CD8-positive, alpha-beta T cell (primary cell): ENCODE measurements at regions of chr20 and their contacts with region 1.

Region 1: GRCh38 chr20:19522071-19522801 is 235.8 kb upstream of the RIN2 start:
- DNase-seq: peak in 3 of 9 experiments; percentile 8 to 27 (median 25)
- ATAC-seq: no peak
- H3K4me3 ChIP-seq: no peak overlapping the region
- H3K4me3 Mint-ChIP-seq: no peak overlapping the region
- H3K27ac ChIP-seq: no peak overlapping the region
- H3K27ac Mint-ChIP-seq: peak overlapping the region; percentile 19
- H3K4me1 ChIP-seq: peaks cover 26% of the 10 kb centered on the region
- H3K4me1 Mint-ChIP-seq: peaks cover 22% of the 10 kb centered on the region
- H3K27me3 ChIP-seq: no peaks in the 10 kb centered on the region
- H3K27me3 Mint-ChIP-seq: peaks cover 2% of the 10 kb centered on the region
- CTCF ChIP-seq: no peak

Region 2: GRCh38 chr20:18984238-18985200 is 537.7 kb before region 1 on chr20:
- CTCF ChIA-PET with region 1: no interaction called
- POLR2A ChIA-PET with region 1: no interaction called
- intact Hi-C with region 1: no loop called
- DNase-seq: no peak
- ATAC-seq: no peak
- H3K4me3 ChIP-seq: no peak overlapping the region
- H3K4me3 Mint-ChIP-seq: no peak overlapping the region
- H3K27ac ChIP-seq: no peak overlapping the region
- H3K27ac Mint-ChIP-seq: no peak overlapping the region
- H3K4me1 ChIP-seq: no peaks in the 10 kb centered on the region
- H3K4me1 Mint-ChIP-seq: no peaks in the 10 kb centered on the region
- H3K27me3 ChIP-seq: no peaks in the 10 kb centered on the region
- H3K27me3 Mint-ChIP-seq: peaks cover under 1% of the 10 kb centered on the region
- CTCF ChIP-seq: no peak

Region 3: DNA sequence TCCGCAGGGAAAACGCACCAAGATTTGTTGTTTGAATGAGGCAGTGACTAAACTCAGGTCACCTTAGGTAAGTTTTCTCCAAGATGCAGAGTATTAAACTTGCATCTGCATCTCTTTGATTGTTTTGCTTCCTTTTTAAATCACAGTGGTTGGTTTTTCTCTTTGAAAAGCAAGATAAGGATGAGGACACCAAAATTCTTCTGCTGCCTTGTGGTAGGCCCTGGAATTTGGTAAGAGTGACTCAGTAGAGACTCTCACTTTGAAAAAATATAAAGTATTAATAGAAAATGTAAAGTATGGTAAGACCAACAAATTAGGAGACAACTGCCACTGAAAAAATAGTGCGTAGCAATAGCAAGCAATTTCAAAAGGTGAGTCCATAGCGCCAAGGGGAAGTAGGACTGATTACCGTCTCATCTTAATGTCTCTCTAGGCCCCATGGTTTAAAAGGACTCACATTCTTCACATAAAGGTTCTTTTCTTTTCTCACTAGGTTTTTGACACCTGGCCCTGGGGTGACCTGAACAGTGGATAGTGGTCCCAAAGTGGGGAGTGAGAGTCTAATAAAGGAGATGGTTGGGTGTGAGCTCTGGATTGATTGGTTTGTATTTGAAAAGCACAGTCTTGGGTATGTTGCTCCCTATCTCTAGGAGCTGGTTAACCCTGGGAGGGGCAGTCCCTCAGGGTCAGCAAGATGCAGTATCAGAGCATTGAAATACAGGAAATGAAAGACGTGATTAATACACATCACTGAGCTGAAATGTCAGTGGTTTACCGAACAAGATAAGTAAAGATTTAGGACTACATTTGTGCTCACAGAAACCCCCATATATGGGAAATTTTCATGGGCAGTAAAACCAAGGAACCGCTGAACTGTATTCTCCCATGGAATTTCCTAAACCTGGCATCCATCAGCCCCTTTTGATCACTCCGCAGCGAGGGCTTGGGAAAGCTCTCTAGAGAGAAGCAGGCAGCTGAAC is 88.6 kb before region 1 on chr20:
- CTCF ChIA-PET with region 1: no interaction called
- POLR2A ChIA-PET with region 1: no interaction called
- intact Hi-C with region 1: no loop called
- DNase-seq: no peak
- ATAC-seq: no peak
- H3K4me3 ChIP-seq: no peak overlapping the region
- H3K4me3 Mint-ChIP-seq: no peak overlapping the region
- H3K27ac ChIP-seq: no peak overlapping the region
- H3K27ac Mint-ChIP-seq: no peak overlapping the region
- H3K4me1 ChIP-seq: no peaks in the 10 kb centered on the region
- H3K4me1 Mint-ChIP-seq: no peaks in the 10 kb centered on the region
- H3K27me3 ChIP-seq: no peaks in the 10 kb centered on the region
- H3K27me3 Mint-ChIP-seq: peaks cover 5% of the 10 kb centered on the region
- CTCF ChIP-seq: no peak

Region 4: GRCh38 chr20:19492687-19493336 is 29.4 kb before region 1 on chr20:
- CTCF ChIA-PET with region 1: no interaction called
- POLR2A ChIA-PET with region 1: no interaction called
- intact Hi-C with region 1: no loop called
- DNase-seq: no peak
- ATAC-seq: no peak
- H3K4me3 ChIP-seq: no peak overlapping the region
- H3K4me3 Mint-ChIP-seq: no peak overlapping the region
- H3K27ac ChIP-seq: no peak overlapping the region
- H3K27ac Mint-ChIP-seq: no peak overlapping the region
- H3K4me1 ChIP-seq: no peaks in the 10 kb centered on the region
- H3K4me1 Mint-ChIP-seq: no peaks in the 10 kb centered on the region
- H3K27me3 ChIP-seq: no peaks in the 10 kb centered on the region
- H3K27me3 Mint-ChIP-seq: no peaks in the 10 kb centered on the region
- CTCF ChIP-seq: no peak

Region 5: DNA sequence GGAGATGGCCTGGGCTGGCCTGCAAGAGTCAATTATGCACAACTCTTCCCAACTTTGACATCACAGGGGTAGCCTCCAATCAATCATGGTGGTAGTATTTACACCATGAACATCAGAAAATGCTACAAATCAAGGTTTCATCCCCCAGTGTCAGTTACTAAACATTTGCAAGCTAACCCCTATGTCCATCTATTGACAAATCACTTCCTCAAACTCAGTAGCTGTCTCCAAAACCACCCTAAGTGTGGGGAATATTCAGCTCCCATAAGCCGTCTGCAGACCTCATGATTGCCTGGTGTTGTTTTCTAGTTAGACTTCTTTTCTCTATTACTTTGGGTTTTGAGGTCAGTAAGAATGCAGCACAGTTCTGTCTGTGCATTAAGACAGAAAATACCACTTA is 35.1 kb after region 1 on chr20:
- CTCF ChIA-PET with region 1: no interaction called
- POLR2A ChIA-PET with region 1: no interaction called
- intact Hi-C with region 1: loop called in 1 of 2 experiments (anchors 1 kb)
- DNase-seq: no peak
- ATAC-seq: no peak
- H3K4me3 ChIP-seq: no peak overlapping the region
- H3K4me3 Mint-ChIP-seq: no peak overlapping the region
- H3K27ac ChIP-seq: no peak overlapping the region
- H3K27ac Mint-ChIP-seq: no peak overlapping the region
- H3K4me1 ChIP-seq: no peaks in the 10 kb centered on the region
- H3K4me1 Mint-ChIP-seq: peaks cover 5% of the 10 kb centered on the region
- H3K27me3 ChIP-seq: no peaks in the 10 kb centered on the region
- H3K27me3 Mint-ChIP-seq: no peaks in the 10 kb centered on the region
- CTCF ChIP-seq: no peak